ENCODE measurements at regions of chr9 and their contacts with region 1.

Region 1: DNA sequence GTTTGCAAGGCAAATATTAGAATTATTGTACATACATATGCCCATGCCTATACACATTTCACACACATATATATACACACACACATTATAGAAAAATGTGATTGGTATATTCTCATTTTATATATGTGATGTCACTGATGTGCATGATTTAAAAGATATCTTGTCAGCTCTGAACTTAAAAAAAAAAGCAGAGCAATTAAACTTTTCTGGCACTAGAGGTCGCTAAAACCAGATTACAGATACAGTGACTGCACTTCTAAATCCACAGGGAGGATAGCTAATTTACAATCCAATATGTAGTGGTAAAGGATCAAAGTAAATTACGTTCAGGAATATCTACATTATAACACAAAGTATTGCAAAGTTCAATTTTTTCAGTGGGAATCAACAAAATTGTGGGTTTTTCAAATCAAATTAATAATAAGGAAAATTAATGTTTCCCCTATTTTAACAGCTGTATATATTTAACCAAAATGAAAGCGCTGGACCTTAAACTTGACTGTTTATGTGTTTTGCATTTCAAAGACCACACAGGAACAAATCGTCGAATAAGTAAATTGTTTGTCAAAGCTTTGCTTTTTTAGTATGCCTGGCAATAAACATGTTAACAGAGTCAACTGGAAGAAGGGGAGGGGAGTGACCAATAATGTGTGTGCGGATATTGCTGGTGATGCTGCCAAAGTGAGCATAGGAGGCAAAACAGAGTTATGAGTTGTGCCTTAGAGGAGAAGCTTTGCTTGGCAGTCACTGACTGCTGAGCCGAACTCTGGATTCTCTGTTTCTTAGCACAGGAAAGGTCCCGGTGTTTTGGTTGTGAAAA is 1201.3 kb upstream of the C9orf72 start:
- DNase-seq: peak; percentile 64
- ATAC-seq: no peak
- H3K4me3 ChIP-seq: no peak overlapping the region
- H3K27ac ChIP-seq: no peak overlapping the region
- H3K4me1 ChIP-seq: peaks cover 6% of the 10 kb centered on the region; the same call in 1 of the 2 replicates
- H3K27me3 ChIP-seq: no peaks in the 10 kb centered on the region
- CTCF ChIP-seq: peak; percentile 72

Region 2: DNA sequence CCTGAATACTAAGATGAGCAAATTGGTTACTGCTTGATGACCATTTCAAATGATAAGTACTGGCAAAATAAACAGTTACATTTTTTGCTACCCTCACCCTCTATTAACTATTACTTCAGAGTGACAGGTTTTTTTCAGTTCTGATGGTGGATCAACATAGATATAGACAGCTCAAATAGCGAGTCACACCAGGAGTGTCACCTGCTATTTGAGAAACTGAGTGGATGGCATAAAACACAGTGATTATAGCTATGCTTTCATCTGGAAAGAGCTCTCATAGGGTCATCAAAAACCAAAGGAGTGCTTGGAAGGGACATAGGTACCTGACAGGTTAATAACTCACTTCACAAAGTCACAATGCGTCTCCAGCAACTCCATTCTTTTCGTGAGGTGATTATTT is 956.9 kb before region 1 on chr9:
- CTCF ChIA-PET with region 1: no interaction called
- POLR2A ChIA-PET with region 1: no interaction called
- intact Hi-C with region 1: no loop called
- DNase-seq: no peak
- ATAC-seq: no peak
- H3K4me3 ChIP-seq: no peak overlapping the region
- H3K27ac ChIP-seq: no peak overlapping the region
- H3K4me1 ChIP-seq: no peaks in the 10 kb centered on the region
- H3K27me3 ChIP-seq: 0 out of 2 replicates have a peak, but pooled peaks cover 5% of the 10 kb centered on the region
- CTCF ChIP-seq: no peak

Region 3: DNA sequence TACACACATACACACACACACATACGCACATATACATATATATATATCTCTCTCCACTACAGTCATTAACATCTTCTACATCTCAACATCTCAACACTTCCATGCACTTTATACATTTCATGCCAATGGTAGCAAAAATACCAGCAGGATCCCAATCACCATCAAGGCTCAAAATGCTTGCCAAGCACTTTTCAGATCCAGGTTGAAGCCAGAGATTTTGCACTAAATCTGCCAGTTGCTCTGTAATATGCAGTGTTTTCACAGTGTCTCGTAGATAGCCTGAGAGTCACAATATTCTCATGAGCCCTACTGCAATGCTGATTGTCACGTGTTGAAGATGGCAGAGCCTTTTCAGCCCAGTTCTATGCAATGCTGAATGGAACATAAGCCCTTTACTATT is 60.4 kb before region 1 on chr9:
- CTCF ChIA-PET with region 1: no interaction called
- POLR2A ChIA-PET with region 1: no interaction called
- intact Hi-C with region 1: no loop called
- DNase-seq: no peak
- ATAC-seq: no peak
- H3K4me3 ChIP-seq: no peak overlapping the region
- H3K27ac ChIP-seq: no peak overlapping the region
- H3K4me1 ChIP-seq: no peaks in the 10 kb centered on the region
- H3K27me3 ChIP-seq: no peaks in the 10 kb centered on the region
- CTCF ChIP-seq: no peak

Region 4: DNA sequence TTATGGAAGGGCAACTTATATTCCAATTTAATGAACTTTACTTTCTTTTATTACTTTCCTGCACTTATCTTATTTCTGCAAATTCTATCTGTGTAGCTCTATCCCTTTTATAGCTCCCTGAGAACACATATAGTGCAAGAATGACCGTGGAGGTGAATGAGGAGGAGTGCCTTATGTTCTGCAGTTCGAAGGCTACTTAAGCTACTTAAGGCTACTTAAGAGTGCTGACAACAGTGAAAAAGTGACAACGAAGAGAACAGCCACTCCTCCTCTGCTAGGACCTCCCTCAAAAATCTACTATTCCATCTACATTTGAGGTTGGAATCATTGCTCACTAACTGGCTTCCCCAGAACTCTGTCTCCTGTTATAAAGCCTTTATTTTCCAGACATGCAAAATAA is 164.4 kb after region 1 on chr9:
- CTCF ChIA-PET with region 1: no interaction called
- POLR2A ChIA-PET with region 1: no interaction called
- intact Hi-C with region 1: loop called (anchors 10 kb)
- DNase-seq: no peak
- ATAC-seq: no peak
- H3K4me3 ChIP-seq: no peak overlapping the region
- H3K27ac ChIP-seq: no peak overlapping the region
- H3K4me1 ChIP-seq: peaks cover 6% of the 10 kb centered on the region; the same call in 1 of the 2 replicates
- H3K27me3 ChIP-seq: no peaks in the 10 kb centered on the region
- CTCF ChIP-seq: no peak

Region 5: GRCh38 chr9:29006628-29007027 is 232.0 kb after region 1 on chr9:
- CTCF ChIA-PET with region 1: interaction called, 5 read pairs
- POLR2A ChIA-PET with region 1: no interaction called
- intact Hi-C with region 1: loop called (anchors 10 kb)
- DNase-seq: peak; percentile 72
- ATAC-seq: peak; percentile 99
- H3K4me3 ChIP-seq: no peak overlapping the region
- H3K27ac ChIP-seq: no peak overlapping the region
- H3K4me1 ChIP-seq: peaks cover 10% of the 10 kb centered on the region
- H3K27me3 ChIP-seq: no peaks in the 10 kb centered on the region
- CTCF ChIP-seq: no peak

Region 6: DNA sequence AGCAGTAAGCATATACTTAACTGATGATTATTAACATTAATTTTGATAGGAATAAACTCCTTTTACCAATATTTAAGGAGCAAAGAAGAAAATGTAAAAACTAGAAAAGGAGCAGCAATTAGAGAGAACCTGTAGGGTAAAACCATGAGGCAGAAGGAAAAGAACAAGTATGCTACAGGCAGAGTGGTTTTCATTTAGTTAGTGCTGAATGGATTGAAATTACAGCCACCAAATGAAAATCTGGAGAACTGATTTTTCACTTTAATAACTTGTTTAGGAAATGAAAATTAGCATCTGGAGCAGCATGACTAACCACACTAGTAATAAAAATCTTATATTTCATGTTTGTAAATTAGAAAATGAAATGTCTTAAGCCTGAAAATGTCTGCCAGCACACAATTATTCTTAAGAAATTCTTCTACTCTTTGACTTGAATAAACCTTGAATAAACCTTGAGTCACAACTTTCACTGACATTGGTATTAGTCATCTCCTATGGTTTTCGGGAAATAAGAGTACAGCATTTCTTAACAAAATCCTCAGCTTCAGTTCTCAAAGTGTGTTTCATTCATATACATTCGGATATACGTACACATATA is 303.5 kb after region 1 on chr9:
- CTCF ChIA-PET with region 1: no interaction called
- POLR2A ChIA-PET with region 1: no interaction called
- intact Hi-C with region 1: loop called (anchors 10 kb)
- DNase-seq: peak; percentile 84
- ATAC-seq: peak; percentile 93
- H3K4me3 ChIP-seq: peak overlapping the region; percentile 38; the same call in 1 of the 2 replicates
- H3K27ac ChIP-seq: peak overlapping the region; percentile 92
- H3K4me1 ChIP-seq: peaks cover 23% of the 10 kb centered on the region
- H3K27me3 ChIP-seq: no peaks in the 10 kb centered on the region
- CTCF ChIP-seq: no peak